ENCODE measurements at regions of chr4 and their contacts with region 1.

Region 1: GRCh38 chr4:88792268-88792781 is 94.7 kb upstream of the NAP1L5 start:
- DNase-seq: peak; percentile 77
- H3K4me3 Mint-ChIP-seq: no peak overlapping the region
- H3K27ac Mint-ChIP-seq: peak overlapping the region; percentile 94
- H3K4me1 Mint-ChIP-seq: peaks cover 18% of the 10 kb centered on the region
- H3K27me3 Mint-ChIP-seq: no peaks in the 10 kb centered on the region
- CTCF ChIP-seq: no peak

Region 2: GRCh38 chr4:88523325-88524129 is 268.8 kb before region 1 on chr4 and contains the start of gene PYURF:
- CTCF ChIA-PET with region 1: interaction called, 7 read pairs
- POLR2A ChIA-PET with region 1: no interaction called
- intact Hi-C with region 1: loop called (anchors 5 kb)
- DNase-seq: peak; percentile 93
- H3K4me3 Mint-ChIP-seq: peak within 1 kb of the TSS; percentile 97
- H3K27ac Mint-ChIP-seq: peak within 1 kb of the TSS; percentile 89
- H3K4me1 Mint-ChIP-seq: peaks cover 14% of the 10 kb centered on the region
- H3K27me3 Mint-ChIP-seq: no peaks in the 10 kb centered on the region
- CTCF ChIP-seq: no peak
- total RNA-seq, gene PYURF: 80.9 and 82.5 TPM in 2 replicates

Region 3: GRCh38 chr4:88880501-88881226 is 88.3 kb after region 1 on chr4:
- CTCF ChIA-PET with region 1: no interaction called
- POLR2A ChIA-PET with region 1: no interaction called
- intact Hi-C with region 1: no loop called
- DNase-seq: no peak
- H3K4me3 Mint-ChIP-seq: no peak overlapping the region
- H3K27ac Mint-ChIP-seq: no peak overlapping the region
- H3K4me1 Mint-ChIP-seq: no peaks in the 10 kb centered on the region
- H3K27me3 Mint-ChIP-seq: no peaks in the 10 kb centered on the region
- CTCF ChIP-seq: no peak

Measured in MCF 10A (cell line).